ENCODE measurements at regions of chr17 and their contacts with region 1.

Region 1: GRCh38 chr17:77247048-77247541 is 106.3 kb downstream of the SEC14L1 start:
- DNase-seq: peak; percentile 72 to 98 (median 86)
- ATAC-seq: peak; percentile 95 to 100 (median 98)
- H3K4me3 ChIP-seq: peak overlapping the region; percentile 42 to 71 (median 61)
- H3K27ac ChIP-seq: no peak overlapping the region
- H3K4me1 ChIP-seq: peaks cover 0 to 4% (median 0%) of the 10 kb centered on the region in 3 donors
- H3K27me3 ChIP-seq: no peaks in the 10 kb centered on the region
- CTCF ChIP-seq: peak; percentile 95 to 99 (median 98)

Region 2: GRCh38 chr17:76868176-76868668 is 378.9 kb before region 1 on chr17 and contains the start of gene MGAT5B:
- intact Hi-C with region 1: loop called in 2 of 3 experiments (anchors 10 kb)
- DNase-seq: peak; percentile 61 to 97 (median 80)
- ATAC-seq: peak; percentile 97 to 99 (median 98)
- H3K4me3 ChIP-seq: peak within 1 kb of the TSS in 2 of 4 donors; percentile 31 to 35
- H3K27ac ChIP-seq: no peak within 1 kb of the TSS
- H3K4me1 ChIP-seq: no peaks in the 10 kb centered on the region
- H3K27me3 ChIP-seq: peaks cover 0 to 12% (median 2%) of the 10 kb centered on the region in 4 donors
- CTCF ChIP-seq: peak; percentile 67 to 84 (median 76)
- total RNA-seq, gene MGAT5B: 0.21 to 0.38 (median 0.25) TPM in 5 of 6 donors, not detected in the other

Region 3: GRCh38 chr17:77076124-77076872 is 170.8 kb before region 1 on chr17:
- intact Hi-C with region 1: loop called in 1 of 3 experiments (anchors 10 kb)
- DNase-seq: no peak
- ATAC-seq: no peak
- H3K4me3 ChIP-seq: no peak overlapping the region
- H3K27ac ChIP-seq: no peak overlapping the region
- H3K4me1 ChIP-seq: no peaks in the 10 kb centered on the region
- H3K27me3 ChIP-seq: peaks cover 0 to 5% (median 0%) of the 10 kb centered on the region in 4 donors
- CTCF ChIP-seq: no peak

Region 4: GRCh38 chr17:77086433-77087010 is 160.6 kb before region 1 on chr17:
- intact Hi-C with region 1: loop called in 1 of 3 experiments (anchors 2 kb)
- DNase-seq: peak; percentile 80 to 99 (median 92)
- ATAC-seq: peak; percentile 69 to 83 (median 78)
- H3K4me3 ChIP-seq: no peak overlapping the region
- H3K27ac ChIP-seq: no peak overlapping the region
- H3K4me1 ChIP-seq: peaks cover 0 to 20% (median 11%) of the 10 kb centered on the region in 3 donors
- H3K27me3 ChIP-seq: no peaks in the 10 kb centered on the region
- CTCF ChIP-seq: peak; percentile 83 to 88 (median 86)

Region 5: GRCh38 chr17:77127735-77128361 is 119.2 kb before region 1 on chr17:
- intact Hi-C with region 1: no loop called
- DNase-seq: peak in 3 of 6 donors; percentile 46 to 57 (median 55)
- ATAC-seq: peak; percentile 41 to 61 (median 54)
- H3K4me3 ChIP-seq: peak overlapping the region in 1 of 4 donors; percentile 11
- H3K27ac ChIP-seq: peak overlapping the region in 2 of 4 donors; percentile 31 to 55
- H3K4me1 ChIP-seq: peaks cover 0 to 21% (median 8%) of the 10 kb centered on the region in 3 donors
- H3K27me3 ChIP-seq: no peaks in the 10 kb centered on the region
- CTCF ChIP-seq: no peak

Measured in pancreas (tissue), 10 donors.